ENCODE measurements at regions of chr5 and their contacts with region 1.

Region 1: GRCh38 chr5:55290991-55291390 is 16.5 kb downstream of the DHX29 start:
- DNase-seq: no peak
- ATAC-seq: no peak
- H3K4me3 ChIP-seq: no peak overlapping the region
- H3K27ac ChIP-seq: no peak overlapping the region
- H3K4me1 ChIP-seq: peaks cover 0 to 4% of the 10 kb centered on the region in 2 donors
- H3K27me3 ChIP-seq: no peaks in the 10 kb centered on the region
- CTCF ChIP-seq: no peak
- POLR2A ChIP-seq: no peak

Region 2: DNA sequence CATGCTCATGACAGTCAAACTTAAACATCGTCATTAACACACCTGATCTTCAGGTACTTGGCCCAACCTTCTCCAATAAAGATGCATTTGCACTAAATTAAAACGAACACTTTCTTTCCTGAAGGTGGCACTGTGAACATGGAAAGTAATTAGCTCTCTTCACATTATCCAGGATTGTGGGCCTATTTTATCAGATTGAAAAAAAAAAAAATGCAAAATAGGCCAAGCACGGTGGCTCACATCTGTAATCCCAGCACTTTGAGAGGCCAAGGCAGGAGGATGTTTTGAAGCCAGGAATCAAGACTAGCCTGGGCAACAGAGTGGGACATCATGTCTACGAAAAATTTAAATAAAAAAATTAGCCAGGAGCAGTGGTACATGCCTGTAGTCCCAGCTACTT is 103.6 kb before region 1 on chr5:
- in situ Hi-C with region 1: no loop called
- intact Hi-C with region 1: no loop called
- DNase-seq: no peak
- ATAC-seq: no peak
- H3K4me3 ChIP-seq: no peak overlapping the region
- H3K27ac ChIP-seq: no peak overlapping the region
- H3K4me1 ChIP-seq: no peaks in the 10 kb centered on the region
- H3K27me3 ChIP-seq: peaks cover 11 to 20% (median 20%) of the 10 kb centered on the region in 3 donors
- CTCF ChIP-seq: no peak
- POLR2A ChIP-seq: no peak

Region 3: GRCh38 chr5:55254802-55255201 is 36.2 kb before region 1 on chr5:
- in situ Hi-C with region 1: no loop called
- intact Hi-C with region 1: loop called (anchors 5 kb)
- DNase-seq: no peak
- ATAC-seq: no peak
- H3K4me3 ChIP-seq: no peak overlapping the region
- H3K27ac ChIP-seq: no peak overlapping the region
- H3K4me1 ChIP-seq: no peaks in the 10 kb centered on the region
- H3K27me3 ChIP-seq: no peaks in the 10 kb centered on the region
- CTCF ChIP-seq: no peak
- POLR2A ChIP-seq: no peak

Region 4: GRCh38 chr5:55306641-55307382 is 15.8 kb after region 1 on chr5:
- in situ Hi-C with region 1: no loop called
- intact Hi-C with region 1: no loop called
- DNase-seq: no peak
- ATAC-seq: peak in 1 of 2 donors; percentile 11
- H3K4me3 ChIP-seq: peak overlapping the region; percentile 64 to 97 (median 86)
- H3K27ac ChIP-seq: peak overlapping the region; percentile 86 to 96 (median 95)
- H3K4me1 ChIP-seq: peaks cover 41 to 69% of the 10 kb centered on the region in 2 donors
- H3K27me3 ChIP-seq: no peaks in the 10 kb centered on the region
- CTCF ChIP-seq: no peak
- POLR2A ChIP-seq: no peak

Measured in gastrocnemius medialis (tissue), 4 donors.